ENCODE measurements at regions of chr17 and their contacts with region 1.

Region 1: DNA sequence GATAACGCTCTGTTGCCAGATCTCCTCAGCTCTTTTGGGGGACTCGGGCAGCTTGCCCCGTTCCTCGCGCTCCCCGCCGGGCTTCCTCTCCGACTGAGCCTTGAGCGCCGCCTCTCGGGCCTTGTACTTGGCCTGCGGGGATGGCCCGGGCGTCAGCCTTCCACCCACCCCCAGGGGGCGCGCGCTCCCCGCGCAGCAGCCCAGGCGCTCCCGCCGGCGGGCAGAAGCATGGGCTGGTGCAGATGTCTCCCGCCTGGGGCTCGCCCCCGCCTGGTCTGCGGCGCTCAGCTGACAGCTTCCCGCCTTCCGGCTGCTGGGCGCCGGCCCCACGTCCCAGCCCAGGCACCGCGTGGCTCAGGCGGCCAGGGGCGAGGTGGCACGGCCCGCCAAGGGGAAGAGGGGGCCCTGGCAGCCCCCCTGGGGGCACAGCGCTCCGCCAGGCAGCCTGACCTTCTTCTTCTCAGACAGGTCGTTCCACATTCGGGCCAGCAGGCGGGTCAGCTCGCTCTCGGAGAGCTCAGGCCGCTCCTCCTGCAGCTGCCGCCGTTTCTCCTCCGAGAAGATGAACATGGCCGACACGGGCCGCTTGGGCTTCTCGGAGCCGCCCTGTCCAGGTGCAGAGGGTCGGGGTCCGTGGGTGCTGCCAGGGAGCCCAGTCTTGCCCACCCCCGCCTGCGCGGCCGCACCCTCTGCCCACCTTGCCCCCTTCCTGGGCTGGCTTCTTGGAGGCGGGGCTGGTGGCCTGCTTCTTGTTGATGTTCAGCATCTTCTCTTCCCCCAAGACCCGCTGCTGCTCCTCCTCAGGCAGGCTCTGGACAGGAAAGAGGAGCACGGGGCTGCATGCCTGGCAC is 8.9 kb downstream of the UBTF start:
- DNase-seq: peak; percentile 96
- ATAC-seq: peak; percentile 93

Region 2: DNA sequence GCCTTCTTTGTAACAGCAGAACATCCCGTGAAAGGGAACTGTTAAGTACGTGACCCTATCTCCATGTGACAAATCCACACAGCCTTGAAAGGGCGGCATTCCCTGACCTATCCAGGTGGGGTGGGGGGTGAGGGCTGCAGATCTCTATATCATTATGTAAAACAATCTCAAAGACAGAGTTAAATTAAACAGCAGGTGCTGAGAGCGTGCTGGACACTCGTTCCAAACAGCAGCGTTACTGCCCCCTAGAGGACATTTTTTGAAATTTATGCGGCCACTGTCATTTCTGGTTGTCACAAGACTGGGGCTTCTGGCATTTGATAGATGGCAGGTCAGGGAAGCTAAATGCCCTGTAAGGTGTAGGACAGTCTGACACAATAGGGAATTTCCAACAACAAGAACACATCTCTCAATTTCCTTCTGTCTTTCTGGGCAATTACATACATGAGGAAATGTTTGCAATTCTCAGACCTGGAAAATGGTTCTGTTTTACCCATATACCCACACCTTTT is 120.7 kb after region 1 on chr17:
- intact Hi-C with region 1: loop called (anchors 1 kb)
- DNase-seq: peak; percentile 50
- ATAC-seq: peak; percentile 21

Region 3: GRCh38 chr17:44522883-44523671 is 312.5 kb after region 1 on chr17:
- intact Hi-C with region 1: loop called (anchors 5 kb)
- DNase-seq: peak; percentile 75
- ATAC-seq: peak; percentile 76